Posterior vena cava (tissue), 2 donors: ENCODE measurements at regions of chr3 and their contacts with region 1.

Region 1: DNA sequence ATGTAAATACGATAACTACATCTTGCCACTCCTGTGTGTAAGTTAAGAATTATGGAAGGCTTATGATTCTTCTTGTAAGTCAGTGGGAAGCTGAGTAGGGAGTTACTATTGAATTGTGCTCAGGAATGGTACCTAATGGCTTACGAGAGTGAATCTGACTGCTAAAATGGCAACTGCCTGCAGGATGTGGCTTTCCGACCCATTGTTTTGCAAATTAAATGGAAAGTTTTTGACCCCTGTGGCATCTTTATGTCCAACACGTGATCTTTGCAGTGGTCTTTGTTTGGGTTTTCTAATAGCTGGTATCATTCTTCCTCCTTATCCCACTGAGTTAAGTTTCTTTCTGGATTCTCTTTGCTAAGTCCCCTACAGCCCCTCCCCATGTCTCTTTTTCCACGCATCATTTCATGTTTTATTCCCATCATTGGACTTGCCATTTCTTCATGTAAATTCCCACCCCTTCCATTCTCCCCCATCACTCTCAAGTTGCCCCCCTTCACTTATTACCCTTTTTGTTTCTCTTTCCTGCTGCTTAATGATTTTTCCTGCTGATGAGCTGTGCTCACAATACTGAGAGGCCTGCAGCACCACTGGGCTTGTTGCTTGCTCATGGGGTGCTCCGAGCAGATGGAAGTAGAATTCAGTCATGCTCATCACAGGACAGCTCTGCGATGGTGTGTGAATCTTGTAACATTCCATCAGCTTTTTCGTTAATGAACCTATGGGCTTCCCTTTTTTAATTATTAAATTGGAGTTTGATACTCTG is 428.2 kb upstream of the IL12A start:
- DNase-seq: no peak

Region 2: GRCh38 chr3:159604151-159604581 is 43.8 kb after region 1 on chr3:
- intact Hi-C with region 1: loop called in 1 of 2 experiments (anchors 1 kb)
- DNase-seq: no peak

Region 3: GRCh38 chr3:159872374-159873109 is 312.1 kb after region 1 on chr3:
- intact Hi-C with region 1: no loop called
- DNase-seq: no peak